Endothelial cell of umbilical vein (primary cell): ENCODE measurements at regions of chr3 and their contacts with region 1.

Region 1: GRCh38 chr3:184229394-184230080 is at the start of gene VWA5B2:
- DNase-seq: peak; percentile 60
- H3K4me3 ChIP-seq: peak within 1 kb of the TSS in 1 of 3 experiments; percentile 25
- H3K27ac ChIP-seq: no peak within 1 kb of the TSS
- H3K4me1 ChIP-seq: peaks cover 4% of the 10 kb centered on the region
- H3K27me3 ChIP-seq: peaks cover 38 to 57% of the 10 kb centered on the region in 2 experiments
- CTCF ChIP-seq: peak in 1 of 2 donors; percentile 34
- POLR2A ChIP-seq: no peak
- total RNA-seq, gene VWA5B2: not detected in 2 replicates

Region 2: DNA sequence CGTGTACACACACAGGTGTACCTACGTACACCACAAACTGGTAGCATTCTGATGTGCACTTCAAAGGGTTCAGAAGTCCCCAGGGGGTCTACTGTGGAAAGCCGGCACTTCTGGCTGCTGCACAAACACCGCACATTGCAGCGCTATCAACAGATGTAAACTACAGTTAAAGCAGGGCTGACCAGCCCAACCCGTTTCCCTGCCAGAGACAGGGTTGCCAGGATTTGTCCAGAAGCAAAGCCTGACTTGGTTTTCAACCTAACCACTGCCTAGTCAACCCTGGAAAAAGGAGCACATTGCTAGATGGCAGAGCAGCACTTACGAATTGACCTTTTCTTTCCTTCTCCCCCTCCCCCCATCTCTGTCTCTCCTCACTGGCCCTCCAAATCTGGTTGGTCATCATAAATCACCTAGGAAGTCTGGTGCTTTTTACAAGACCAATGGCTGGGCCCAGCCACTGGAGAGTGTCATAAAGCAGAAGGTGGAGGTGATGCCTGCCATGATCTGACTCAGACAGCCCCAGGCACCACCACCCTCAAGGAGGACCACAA is 263.2 kb before region 1 on chr3:
- CTCF ChIA-PET with region 1: no interaction called
- POLR2A ChIA-PET with region 1: no interaction called
- dilution Hi-C with region 1: no loop called
- intact Hi-C with region 1: no loop called
- DNase-seq: no peak
- H3K4me3 ChIP-seq: no peak overlapping the region
- H3K27ac ChIP-seq: no peak overlapping the region
- H3K4me1 ChIP-seq: no peaks in the 10 kb centered on the region
- H3K27me3 ChIP-seq: no peaks in the 10 kb centered on the region
- CTCF ChIP-seq: no peak
- POLR2A ChIP-seq: no peak

Region 3: DNA sequence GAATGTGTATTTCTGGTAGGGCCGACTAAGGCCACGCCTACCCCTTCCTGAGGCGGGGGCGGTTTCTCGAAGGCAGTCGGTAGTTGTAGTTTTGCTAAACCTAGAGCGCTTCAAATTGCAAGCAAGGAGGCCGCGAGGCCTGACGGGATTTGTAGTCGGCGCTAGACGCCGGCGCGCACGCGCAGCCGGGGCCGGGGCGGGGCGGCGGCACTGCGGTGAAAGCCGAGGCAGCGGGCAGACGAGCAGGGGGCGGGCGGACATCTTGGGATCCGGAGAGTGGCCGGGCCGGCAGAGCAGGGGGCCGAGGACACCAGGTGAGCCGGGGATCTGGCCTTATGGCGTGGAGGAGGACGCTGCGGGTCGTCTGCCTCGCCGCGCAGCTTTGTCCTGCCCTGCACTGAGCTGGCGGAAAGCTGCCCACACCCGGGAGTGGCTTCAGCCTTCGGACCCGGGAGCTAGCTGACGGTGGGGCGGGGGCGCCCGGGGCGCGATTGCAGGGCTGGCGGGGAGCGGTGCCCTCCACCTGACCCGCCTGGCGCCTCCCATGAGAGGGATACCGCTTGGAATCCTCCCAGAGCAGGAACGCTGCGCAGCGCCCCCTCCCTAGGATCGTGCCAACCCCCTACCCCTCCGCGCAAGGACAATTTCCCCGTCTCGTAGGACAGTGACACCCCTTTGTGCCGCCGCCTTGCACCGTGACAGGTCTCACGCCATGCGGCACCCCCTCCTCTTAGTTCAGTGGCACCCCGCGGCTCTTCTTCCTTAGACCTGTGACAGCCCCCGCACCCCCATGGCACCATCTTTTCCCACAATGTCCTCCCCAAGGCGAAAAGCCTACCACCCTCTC is 54.7 kb before region 1 on chr3 and contains the start of gene AP2M1:
- CTCF ChIA-PET with region 1: interaction called, 11 read pairs
- POLR2A ChIA-PET with region 1: no interaction called
- dilution Hi-C with region 1: no loop called
- intact Hi-C with region 1: no loop called
- DNase-seq: peak; percentile 100
- H3K4me3 ChIP-seq: peak within 1 kb of the TSS; percentile 84 to 97 (median 87)
- H3K27ac ChIP-seq: peak within 1 kb of the TSS; percentile 73
- H3K4me1 ChIP-seq: peaks cover 22% of the 10 kb centered on the region
- H3K27me3 ChIP-seq: no peaks in the 10 kb centered on the region
- CTCF ChIP-seq: peak in 1 of 2 donors; percentile 12
- POLR2A ChIP-seq: peak; percentile 91
- total RNA-seq, gene AP2M1: 400 and 431 TPM in 2 replicates

Region 4: GRCh38 chr3:184196536-184196935 is 33.0 kb before region 1 on chr3:
- CTCF ChIA-PET with region 1: interaction called, 19 read pairs
- POLR2A ChIA-PET with region 1: no interaction called
- dilution Hi-C with region 1: no loop called
- intact Hi-C with region 1: no loop called
- DNase-seq: no peak
- H3K4me3 ChIP-seq: no peak overlapping the region
- H3K27ac ChIP-seq: no peak overlapping the region
- H3K4me1 ChIP-seq: no peaks in the 10 kb centered on the region
- H3K27me3 ChIP-seq: no peaks in the 10 kb centered on the region
- CTCF ChIP-seq: no peak
- POLR2A ChIP-seq: no peak

Region 5: DNA sequence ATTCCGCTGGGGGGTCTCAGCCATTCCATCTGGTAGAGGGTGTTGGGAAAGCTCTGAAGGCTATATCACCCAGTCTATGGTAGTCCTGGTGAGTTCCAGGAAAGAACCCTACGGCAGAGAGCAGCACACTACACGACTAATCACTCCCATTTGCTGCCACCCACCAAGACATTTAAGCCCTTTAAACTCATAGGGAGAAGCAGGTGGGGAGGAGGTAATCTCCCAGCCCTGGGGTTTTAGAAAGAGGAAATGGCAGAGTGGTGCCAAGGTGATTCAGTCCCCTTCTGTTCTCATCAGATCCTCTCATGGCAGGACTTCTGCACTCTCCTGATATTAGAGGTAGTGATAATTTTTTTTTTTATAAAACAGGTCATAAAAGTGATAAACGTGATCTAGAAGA is 10.7 kb before region 1 on chr3:
- CTCF ChIA-PET with region 1: interaction called, 65 read pairs
- POLR2A ChIA-PET with region 1: no interaction called
- dilution Hi-C with region 1: no loop called
- intact Hi-C with region 1: no loop called
- DNase-seq: no peak
- H3K4me3 ChIP-seq: no peak overlapping the region
- H3K27ac ChIP-seq: no peak overlapping the region
- H3K4me1 ChIP-seq: peaks cover 8% of the 10 kb centered on the region
- H3K27me3 ChIP-seq: peaks cover 0 to 2% of the 10 kb centered on the region in 2 experiments
- CTCF ChIP-seq: no peak
- POLR2A ChIP-seq: no peak

Region 6: DNA sequence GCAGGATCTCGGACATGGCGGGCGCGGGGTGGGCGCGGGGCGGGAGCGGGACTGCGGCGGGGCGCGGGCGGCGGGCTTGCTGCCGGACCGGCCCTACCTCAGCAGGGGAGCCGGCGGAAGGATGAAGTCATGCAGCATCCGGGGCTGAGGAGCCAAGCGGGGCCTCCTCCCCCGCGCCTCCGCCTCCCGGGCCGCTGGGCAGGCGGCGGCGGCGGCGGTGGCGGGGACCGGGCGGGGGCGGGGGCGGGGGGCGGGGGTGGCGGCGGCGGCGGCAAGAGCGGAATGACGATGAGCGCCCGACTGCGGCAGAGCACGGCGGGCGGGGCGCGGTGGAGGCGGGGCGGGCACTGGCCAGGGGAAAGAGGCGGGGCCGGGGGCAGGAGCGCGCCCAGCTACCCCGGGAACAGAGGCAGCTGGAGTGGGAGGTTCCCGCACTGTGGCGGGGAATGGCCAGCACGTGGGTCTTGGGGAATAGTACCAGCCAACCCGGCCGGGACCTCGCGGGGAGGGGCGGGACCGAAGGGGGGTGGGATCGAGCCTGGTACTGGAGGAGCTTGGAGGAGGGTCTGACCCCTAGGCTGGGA is 31.8 kb after region 1 on chr3 and contains the start of gene CAMK2N2:
- CTCF ChIA-PET with region 1: interaction called, 13 read pairs
- POLR2A ChIA-PET with region 1: no interaction called
- dilution Hi-C with region 1: no loop called
- intact Hi-C with region 1: no loop called
- DNase-seq: no peak
- H3K4me3 ChIP-seq: peak within 1 kb of the TSS in 2 of 3 experiments; percentile 24 to 28
- H3K27ac ChIP-seq: no peak within 1 kb of the TSS
- H3K4me1 ChIP-seq: peaks cover 13% of the 10 kb centered on the region
- H3K27me3 ChIP-seq: peaks cover 26 to 36% of the 10 kb centered on the region in 2 experiments
- CTCF ChIP-seq: no peak
- POLR2A ChIP-seq: no peak
- total RNA-seq, gene CAMK2N2: not detected in 2 replicates

Region 7: DNA sequence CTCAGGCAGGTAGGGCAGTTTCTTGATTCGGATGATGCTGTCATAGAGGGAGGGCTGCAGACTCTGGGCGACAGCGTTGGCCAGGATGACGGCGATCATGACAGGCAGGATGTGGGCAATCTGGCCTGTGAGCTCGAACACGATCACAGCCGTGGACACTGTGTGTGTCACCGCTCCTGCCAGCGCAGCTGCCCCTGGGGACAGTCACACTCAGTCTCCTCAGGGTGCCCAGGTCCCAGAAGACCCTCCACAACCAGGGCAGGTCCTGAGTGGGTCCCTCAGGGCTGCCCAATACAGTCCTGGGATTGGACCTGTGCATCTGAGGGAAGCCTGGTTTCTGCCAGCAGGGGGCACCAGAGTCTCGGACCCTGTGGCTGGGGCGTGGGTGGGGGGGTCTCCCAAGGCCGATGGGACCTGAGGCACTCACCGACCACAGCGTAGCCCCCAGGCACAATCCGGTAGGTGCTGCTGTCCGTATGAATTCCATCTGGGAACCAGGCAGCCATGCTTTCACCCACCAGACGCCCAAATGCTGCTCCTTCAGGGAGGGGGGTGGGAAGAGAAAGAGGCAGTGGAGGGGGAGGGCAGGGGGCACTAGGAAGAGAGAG is 124.7 kb after region 1 on chr3:
- CTCF ChIA-PET with region 1: no interaction called
- POLR2A ChIA-PET with region 1: no interaction called
- dilution Hi-C with region 1: no loop called
- intact Hi-C with region 1: no loop called
- DNase-seq: peak; percentile 37
- H3K4me3 ChIP-seq: no peak overlapping the region
- H3K27ac ChIP-seq: no peak overlapping the region
- H3K4me1 ChIP-seq: no peaks in the 10 kb centered on the region
- H3K27me3 ChIP-seq: no peaks in the 10 kb centered on the region
- CTCF ChIP-seq: peak; percentile 63 to 91
- POLR2A ChIP-seq: no peak

Region 8: GRCh38 chr3:185423178-185423577 is 1193.6 kb after region 1 on chr3:
- CTCF ChIA-PET with region 1: no interaction called
- POLR2A ChIA-PET with region 1: no interaction called
- dilution Hi-C with region 1: no loop called
- intact Hi-C with region 1: no loop called
- DNase-seq: peak; percentile 39
- H3K4me3 ChIP-seq: no peak overlapping the region
- H3K27ac ChIP-seq: no peak overlapping the region
- H3K4me1 ChIP-seq: no peaks in the 10 kb centered on the region
- H3K27me3 ChIP-seq: no peaks in the 10 kb centered on the region
- CTCF ChIP-seq: no peak
- POLR2A ChIP-seq: no peak